ENCODE measurements at regions of chr9 and their contacts with region 1.

Region 1: GRCh38 chr9:137605121-137606004 is at the start of gene ARRDC1:
- DNase-seq: peak; percentile 85
- H3K4me3 Mint-ChIP-seq: peak within 1 kb of the TSS; percentile 85
- H3K27ac Mint-ChIP-seq: peak within 1 kb of the TSS; percentile 74
- H3K4me1 Mint-ChIP-seq: peaks cover 20% of the 10 kb centered on the region
- H3K27me3 Mint-ChIP-seq: peaks cover 6% of the 10 kb centered on the region
- total RNA-seq, gene ARRDC1: 65.7 and 70.3 TPM in 2 replicates

Region 2: GRCh38 chr9:137578518-137579258 is 26.7 kb before region 1 on chr9 and contains the start of gene DPH7:
- intact Hi-C with region 1: loop called (anchors 1 kb)
- DNase-seq: peak; percentile 93
- H3K4me3 Mint-ChIP-seq: peak within 1 kb of the TSS; percentile 88
- H3K27ac Mint-ChIP-seq: peak within 1 kb of the TSS; percentile 58
- H3K4me1 Mint-ChIP-seq: peaks cover 32% of the 10 kb centered on the region
- H3K27me3 Mint-ChIP-seq: no peaks in the 10 kb centered on the region
- total RNA-seq, gene DPH7: 50.3 and 52.1 TPM in 2 replicates